Activated CD8-positive, alpha-beta T cell treated with anti-CD3 and anti-CD28 coated beads for 36 hours (primary cell): ENCODE measurements at regions of chr17 and their contacts with region 1.

Region 1: DNA sequence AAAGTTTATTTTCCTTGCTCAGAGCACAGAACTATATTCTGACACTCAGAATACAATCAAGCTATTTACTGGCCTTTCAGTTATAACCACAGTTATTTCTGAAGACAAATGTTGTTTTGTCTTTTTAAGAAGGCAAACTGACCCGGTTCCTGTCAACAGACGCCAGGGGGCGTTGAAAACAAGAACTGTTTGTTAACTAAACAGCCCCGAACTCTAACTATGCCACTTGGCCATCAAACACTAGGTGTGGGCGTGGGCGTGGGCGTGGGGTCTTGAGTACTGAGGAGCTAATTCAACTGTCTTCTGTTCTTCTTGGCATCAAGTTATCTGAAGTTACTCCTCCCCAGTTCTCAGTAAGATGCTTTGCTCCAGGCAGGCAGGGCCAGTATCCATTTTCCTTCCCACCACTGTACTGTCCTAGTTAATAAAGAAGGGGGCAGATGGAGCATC is 63.2 kb upstream of the MTMR4 start:
- DNase-seq: peak; percentile 65
- ATAC-seq: no peak
- H3K4me3 Mint-ChIP-seq: no peak overlapping the region
- H3K27ac Mint-ChIP-seq: no peak overlapping the region
- H3K4me1 Mint-ChIP-seq: peaks cover 6% of the 10 kb centered on the region
- H3K27me3 Mint-ChIP-seq: no peaks in the 10 kb centered on the region
- CTCF ChIP-seq: peak; percentile 60

Region 2: GRCh38 chr17:58436805-58437239 is 140.8 kb before region 1 on chr17:
- CTCF ChIA-PET with region 1: no interaction called
- POLR2A ChIA-PET with region 1: no interaction called
- intact Hi-C with region 1: no loop called
- DNase-seq: no peak
- ATAC-seq: no peak
- H3K4me3 Mint-ChIP-seq: no peak overlapping the region
- H3K27ac Mint-ChIP-seq: no peak overlapping the region
- H3K4me1 Mint-ChIP-seq: no peaks in the 10 kb centered on the region
- H3K27me3 Mint-ChIP-seq: no peaks in the 10 kb centered on the region
- CTCF ChIP-seq: no peak

Region 3: GRCh38 chr17:58565780-58566189 is 11.9 kb before region 1 on chr17:
- CTCF ChIA-PET with region 1: interaction called, 11 read pairs
- POLR2A ChIA-PET with region 1: no interaction called
- intact Hi-C with region 1: no loop called
- DNase-seq: no peak
- ATAC-seq: no peak
- H3K4me3 Mint-ChIP-seq: no peak overlapping the region
- H3K27ac Mint-ChIP-seq: no peak overlapping the region
- H3K4me1 Mint-ChIP-seq: peaks cover 9% of the 10 kb centered on the region
- H3K27me3 Mint-ChIP-seq: no peaks in the 10 kb centered on the region
- CTCF ChIP-seq: no peak

Region 4: DNA sequence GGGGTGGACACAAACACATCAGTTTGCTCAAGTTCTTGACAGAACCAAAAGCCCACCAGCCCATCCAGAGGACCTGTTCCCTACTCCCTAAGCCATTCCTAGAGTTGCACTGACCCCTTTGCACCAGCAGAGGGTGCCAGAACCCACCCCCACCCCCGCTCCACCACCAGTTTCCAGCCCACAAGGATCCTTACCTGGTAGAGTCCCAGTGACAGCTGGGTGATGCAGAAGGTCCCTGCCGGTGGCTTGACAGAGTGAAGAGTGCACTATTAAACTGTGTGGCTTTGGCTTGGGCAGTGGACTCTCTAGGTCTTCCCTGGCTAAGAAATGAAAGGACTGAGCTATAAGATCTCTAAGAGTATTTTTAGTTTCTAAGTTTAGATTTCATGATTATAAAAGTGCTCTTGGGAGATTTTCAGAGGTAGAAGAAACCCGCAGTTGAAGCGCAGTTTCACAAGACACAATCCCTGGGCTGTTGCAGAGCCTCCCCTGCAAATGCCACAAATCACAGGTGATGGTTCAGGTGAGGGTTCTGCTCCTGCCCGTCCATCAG is 10.1 kb after region 1 on chr17:
- CTCF ChIA-PET with region 1: interaction called, 40 read pairs
- POLR2A ChIA-PET with region 1: no interaction called
- intact Hi-C with region 1: no loop called
- DNase-seq: peak; percentile 70
- ATAC-seq: peak; percentile 89
- H3K4me3 Mint-ChIP-seq: no peak overlapping the region
- H3K27ac Mint-ChIP-seq: no peak overlapping the region
- H3K4me1 Mint-ChIP-seq: no peaks in the 10 kb centered on the region
- H3K27me3 Mint-ChIP-seq: no peaks in the 10 kb centered on the region
- CTCF ChIP-seq: peak; percentile 97